ENCODE measurements at regions of chr5 and their contacts with region 1.

Region 1: GRCh38 chr5:55534436-55535198 is at the start of gene PLPP1:
- DNase-seq: peak; percentile 65 to 93 (median 78)
- ATAC-seq: peak; percentile 82
- H3K4me3 ChIP-seq: peak within 1 kb of the TSS; percentile 74
- H3K4me3 Mint-ChIP-seq: peak within 1 kb of the TSS; percentile 85
- H3K27ac ChIP-seq: peak within 1 kb of the TSS; percentile 60 to 85
- H3K27ac Mint-ChIP-seq: peak within 1 kb of the TSS; percentile 83
- H3K4me1 ChIP-seq: peaks cover 25% of the 10 kb centered on the region
- H3K4me1 Mint-ChIP-seq: peaks cover 48% of the 10 kb centered on the region
- H3K27me3 ChIP-seq: no peaks in the 10 kb centered on the region
- H3K27me3 Mint-ChIP-seq: no peaks in the 10 kb centered on the region
- CTCF ChIP-seq: no peak
- total RNA-seq, gene PLPP1: 2.9 to 3.0 TPM

Region 2: GRCh38 chr5:55650386-55650785 is 115.8 kb after region 1 on chr5:
- CTCF ChIA-PET with region 1: no interaction called
- POLR2A ChIA-PET with region 1: interaction called, 8 read pairs
- intact Hi-C with region 1: loop called in 1 of 2 experiments (anchors 10 kb)
- DNase-seq: peak in 4 of 14 experiments; percentile 6 to 55 (median 46)
- ATAC-seq: peak; percentile 93
- H3K4me3 ChIP-seq: no peak overlapping the region
- H3K4me3 Mint-ChIP-seq: peak overlapping the region; percentile 13
- H3K27ac ChIP-seq: no peak overlapping the region
- H3K27ac Mint-ChIP-seq: peak overlapping the region; percentile 31
- H3K4me1 ChIP-seq: peaks cover 10% of the 10 kb centered on the region
- H3K4me1 Mint-ChIP-seq: peaks cover 22% of the 10 kb centered on the region
- H3K27me3 ChIP-seq: no peaks in the 10 kb centered on the region
- H3K27me3 Mint-ChIP-seq: no peaks in the 10 kb centered on the region
- CTCF ChIP-seq: no peak

Region 3: DNA sequence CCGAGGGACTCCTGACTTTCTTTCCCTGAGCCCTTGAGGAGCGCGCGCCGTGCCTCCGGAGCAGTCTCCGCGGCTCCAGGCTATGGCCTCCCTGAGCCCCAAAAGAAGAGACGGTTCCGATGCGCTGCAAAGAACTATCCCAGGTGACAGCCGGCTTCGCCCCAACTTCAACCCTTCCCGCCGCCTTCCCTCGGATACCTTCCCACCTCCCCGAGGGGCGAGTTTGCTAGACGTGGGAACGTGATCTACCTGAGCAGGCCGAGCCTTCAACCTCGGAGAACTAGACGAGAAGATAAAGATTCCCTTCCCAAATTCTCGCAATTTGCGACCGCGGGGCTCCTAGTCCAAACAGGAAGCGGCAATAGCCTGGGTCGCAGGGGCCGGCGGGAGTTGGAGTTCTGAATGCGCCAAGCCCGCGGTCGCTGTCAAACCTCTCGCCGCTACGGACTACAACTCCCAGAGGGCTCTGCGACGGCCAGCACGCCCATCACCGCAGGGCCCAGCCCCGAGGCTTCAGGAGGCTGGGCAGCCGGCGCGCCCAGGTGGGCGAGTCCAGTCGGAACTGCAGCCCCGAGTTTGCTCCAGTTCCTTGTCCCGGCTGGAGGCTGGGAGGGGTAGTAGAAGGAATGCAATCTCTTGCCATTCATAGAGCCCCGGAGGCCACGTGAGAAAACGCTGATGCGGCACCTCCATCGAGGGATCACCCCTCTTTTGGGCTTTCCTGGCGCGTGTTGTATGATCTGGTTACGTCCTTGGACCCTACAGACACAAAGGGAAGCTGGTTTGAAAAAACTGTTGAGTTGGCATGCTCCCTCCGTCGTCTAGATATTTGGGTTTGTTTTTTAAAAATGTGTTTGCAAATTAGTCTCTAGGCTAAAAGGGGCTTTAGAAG is 177.6 kb after region 1 on chr5 and contains the start of gene SLC38A9:
- CTCF ChIA-PET with region 1: no interaction called
- POLR2A ChIA-PET with region 1: no interaction called
- intact Hi-C with region 1: loop called in 1 of 2 experiments (anchors 5 kb)
- DNase-seq: peak; percentile 83 to 95 (median 90)
- ATAC-seq: peak; percentile 99
- H3K4me3 ChIP-seq: peak within 1 kb of the TSS; percentile 90
- H3K4me3 Mint-ChIP-seq: peak within 1 kb of the TSS; percentile 99
- H3K27ac ChIP-seq: peak within 1 kb of the TSS in 1 of 2 donors; percentile 50
- H3K27ac Mint-ChIP-seq: peak within 1 kb of the TSS; percentile 82
- H3K4me1 ChIP-seq: peaks cover 20% of the 10 kb centered on the region
- H3K4me1 Mint-ChIP-seq: peaks cover 39% of the 10 kb centered on the region
- H3K27me3 ChIP-seq: no peaks in the 10 kb centered on the region
- H3K27me3 Mint-ChIP-seq: no peaks in the 10 kb centered on the region
- CTCF ChIP-seq: no peak
- total RNA-seq, gene SLC38A9: 10.0 to 10.3 TPM